ENCODE measurements at regions of chr13 and their contacts with region 1.

Region 1: GRCh38 chr13:28324181-28324789 is 170.6 kb downstream of the FLT1 start:
- DNase-seq: peak; percentile 80
- H3K4me3 ChIP-seq: no peak overlapping the region
- H3K27ac ChIP-seq: peak overlapping the region; percentile 86
- H3K4me1 ChIP-seq: peaks cover 63% of the 10 kb centered on the region
- H3K27me3 ChIP-seq: no peaks in the 10 kb centered on the region
- CTCF ChIP-seq: peak; percentile 81 to 87
- POLR2A ChIP-seq: no peak

Region 2: GRCh38 chr13:28100150-28101121 is 223.8 kb before region 1 on chr13 and contains the start of gene FLT3:
- CTCF ChIA-PET with region 1: no interaction called
- POLR2A ChIA-PET with region 1: no interaction called
- dilution Hi-C with region 1: no loop called
- intact Hi-C with region 1: no loop called
- DNase-seq: peak; percentile 10
- H3K4me3 ChIP-seq: peak within 1 kb of the TSS in 1 of 3 experiments; percentile 26
- H3K27ac ChIP-seq: no peak within 1 kb of the TSS
- H3K4me1 ChIP-seq: peaks cover 6% of the 10 kb centered on the region
- H3K27me3 ChIP-seq: peaks cover 36 to 68% of the 10 kb centered on the region in 2 experiments
- CTCF ChIP-seq: no peak
- POLR2A ChIP-seq: no peak
- total RNA-seq, gene FLT3: not detected in 2 replicates

Region 3: GRCh38 chr13:28220166-28220565 is 104.1 kb before region 1 on chr13:
- CTCF ChIA-PET with region 1: no interaction called
- POLR2A ChIA-PET with region 1: no interaction called
- dilution Hi-C with region 1: no loop called
- intact Hi-C with region 1: no loop called
- DNase-seq: peak; percentile 7
- H3K4me3 ChIP-seq: no peak overlapping the region
- H3K27ac ChIP-seq: no peak overlapping the region
- H3K4me1 ChIP-seq: no peaks in the 10 kb centered on the region
- H3K27me3 ChIP-seq: no peaks in the 10 kb centered on the region
- CTCF ChIP-seq: no peak
- POLR2A ChIP-seq: no peak

Region 4: DNA sequence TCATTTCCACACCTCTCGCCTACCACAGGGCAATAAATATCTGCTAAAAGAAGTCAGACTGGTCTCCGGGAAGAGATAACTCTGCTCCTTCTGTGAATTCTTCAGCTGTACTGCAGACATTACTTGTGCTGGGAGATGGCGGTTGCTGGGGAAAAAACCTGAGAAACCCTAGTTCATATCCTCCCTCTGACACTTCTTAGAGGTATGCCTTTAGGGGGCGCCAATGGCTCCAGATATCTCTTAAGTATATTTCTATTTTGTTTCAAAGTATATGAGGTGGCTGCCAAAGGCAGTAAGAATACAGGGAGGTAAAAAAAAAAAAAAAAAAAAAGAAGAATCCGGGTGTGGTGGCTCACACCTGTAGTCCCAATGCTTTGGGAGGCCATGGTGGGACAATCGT is 10.7 kb before region 1 on chr13:
- CTCF ChIA-PET with region 1: interaction called, 15 read pairs
- POLR2A ChIA-PET with region 1: no interaction called
- dilution Hi-C with region 1: no loop called
- intact Hi-C with region 1: no loop called
- DNase-seq: peak; percentile 66
- H3K4me3 ChIP-seq: no peak overlapping the region
- H3K27ac ChIP-seq: no peak overlapping the region
- H3K4me1 ChIP-seq: no peaks in the 10 kb centered on the region
- H3K27me3 ChIP-seq: no peaks in the 10 kb centered on the region
- CTCF ChIP-seq: peak; percentile 44 to 48
- POLR2A ChIP-seq: no peak

Region 5: GRCh38 chr13:28379371-28380083 is 55.2 kb after region 1 on chr13:
- CTCF ChIA-PET with region 1: interaction called, 12 read pairs
- POLR2A ChIA-PET with region 1: no interaction called
- dilution Hi-C with region 1: no loop called
- intact Hi-C with region 1: loop called (anchors 2 kb)
- DNase-seq: peak; percentile 86
- H3K4me3 ChIP-seq: no peak overlapping the region
- H3K27ac ChIP-seq: peak overlapping the region; percentile 58
- H3K4me1 ChIP-seq: peaks cover 34% of the 10 kb centered on the region
- H3K27me3 ChIP-seq: no peaks in the 10 kb centered on the region
- CTCF ChIP-seq: no peak
- POLR2A ChIP-seq: peak; percentile 20

Region 6: DNA sequence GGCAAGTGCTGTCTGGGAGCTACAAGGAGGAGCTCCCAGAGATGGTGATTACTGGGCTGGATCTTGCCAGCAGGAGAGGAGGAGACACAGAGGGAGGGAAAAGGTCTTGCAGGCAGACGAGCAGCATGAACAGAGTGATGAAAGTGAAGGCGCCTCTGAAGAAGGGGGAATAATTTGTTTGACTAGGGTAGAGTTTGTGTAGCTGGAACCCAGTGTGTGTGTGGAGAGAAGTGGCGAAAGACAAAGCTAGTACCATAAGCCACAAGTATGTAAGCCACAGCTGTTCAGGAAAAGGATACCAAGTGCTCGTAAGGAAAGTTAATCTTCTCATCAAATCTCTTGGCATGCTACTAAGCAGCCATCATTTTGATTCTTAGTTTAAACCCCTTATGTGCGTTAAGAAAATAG is 165.2 kb after region 1 on chr13:
- CTCF ChIA-PET with region 1: interaction called, 12 read pairs
- POLR2A ChIA-PET with region 1: interaction called, 3 read pairs
- dilution Hi-C with region 1: loop called (anchors 25 kb)
- intact Hi-C with region 1: loop called (anchors 2 kb)
- DNase-seq: peak; percentile 55
- H3K4me3 ChIP-seq: no peak overlapping the region
- H3K27ac ChIP-seq: peak overlapping the region; percentile 76
- H3K4me1 ChIP-seq: peaks cover 46% of the 10 kb centered on the region
- H3K27me3 ChIP-seq: no peaks in the 10 kb centered on the region
- CTCF ChIP-seq: no peak
- POLR2A ChIP-seq: no peak

Region 7: DNA sequence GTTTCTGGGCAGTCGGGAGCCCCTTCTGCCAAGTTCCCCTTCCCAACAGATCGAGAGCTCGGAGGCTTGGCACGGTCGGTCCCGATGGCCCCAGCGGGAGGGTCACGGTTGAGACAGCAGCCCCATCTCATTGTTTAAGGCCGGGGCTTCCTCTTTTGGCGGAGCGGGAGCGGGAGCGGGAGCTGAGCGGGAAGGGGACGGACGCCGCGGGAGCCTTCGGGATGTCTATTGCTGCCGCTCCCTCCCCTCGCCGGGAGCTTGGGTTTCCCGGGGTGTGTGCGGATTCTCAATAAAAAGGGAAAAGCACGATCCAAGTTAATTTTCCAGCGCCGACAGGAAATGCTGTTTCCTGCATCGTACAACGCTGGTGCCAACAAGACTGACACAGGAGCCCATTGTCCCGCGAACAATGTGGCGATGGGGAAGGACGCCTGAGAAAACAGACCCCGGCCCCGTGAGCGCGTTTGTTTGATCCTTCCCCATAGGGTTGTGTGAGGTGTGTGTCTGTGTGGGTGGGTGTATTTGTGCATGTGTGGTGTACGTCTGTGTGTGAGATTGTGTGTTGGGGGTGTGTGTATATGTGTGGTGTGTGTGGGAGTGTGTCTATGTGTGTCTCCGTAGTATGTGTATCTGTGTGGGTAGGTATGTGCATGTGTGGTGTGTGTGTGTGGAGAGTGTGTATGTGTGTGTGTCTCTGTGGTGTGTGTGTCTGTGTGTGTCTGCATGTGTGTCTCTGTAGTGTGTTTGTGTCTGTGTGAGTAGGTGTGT is 207.0 kb after region 1 on chr13:
- CTCF ChIA-PET with region 1: interaction called, 10 read pairs
- POLR2A ChIA-PET with region 1: no interaction called
- dilution Hi-C with region 1: no loop called
- intact Hi-C with region 1: loop called (anchors 2 kb)
- DNase-seq: peak; percentile 85
- H3K4me3 ChIP-seq: peak overlapping the region in 2 of 3 experiments; percentile 45
- H3K27ac ChIP-seq: peak overlapping the region; percentile 36
- H3K4me1 ChIP-seq: peaks cover 14% of the 10 kb centered on the region
- H3K27me3 ChIP-seq: no peaks in the 10 kb centered on the region
- CTCF ChIP-seq: no peak
- POLR2A ChIP-seq: no peak

Region 8: DNA sequence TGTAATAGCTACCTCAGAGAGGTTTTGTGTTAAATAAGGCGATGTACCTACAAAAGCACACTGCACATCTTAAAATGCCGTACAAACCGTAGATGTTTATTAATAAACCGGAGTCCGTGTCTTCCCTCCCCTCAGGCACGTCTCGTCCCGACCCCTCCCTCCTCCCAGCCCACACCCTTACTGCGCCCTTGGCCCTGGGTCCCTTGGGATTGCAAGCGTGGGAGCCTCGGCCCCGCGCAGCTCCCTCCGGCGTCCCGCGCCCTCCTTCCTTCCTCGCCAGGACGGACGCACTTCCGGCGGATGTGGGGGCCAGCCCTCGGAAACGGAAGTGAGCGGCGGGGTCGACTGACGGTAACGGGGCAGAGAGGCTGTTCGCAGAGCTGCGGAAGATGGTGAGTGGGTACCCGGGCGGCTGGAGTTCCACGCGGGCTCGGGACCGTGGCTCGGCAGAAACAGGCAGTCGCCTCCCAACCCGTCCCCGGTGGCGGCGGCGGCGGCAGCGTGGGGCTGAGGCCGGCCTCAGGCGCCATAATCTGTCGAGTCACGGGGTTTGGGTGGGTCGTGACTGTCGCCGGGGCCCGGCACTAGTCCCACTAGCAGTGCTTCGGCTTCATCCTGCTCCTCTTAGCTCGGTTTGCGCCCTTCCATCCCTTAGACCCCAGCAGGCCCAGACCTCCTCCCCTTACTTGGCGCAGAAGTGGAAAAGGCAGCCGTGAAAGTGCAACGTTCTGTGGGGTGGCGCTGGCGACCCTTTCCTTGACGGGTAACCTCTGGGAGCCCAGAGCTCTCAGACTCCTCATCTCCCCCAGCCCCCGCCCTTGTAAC is 334.7 kb after region 1 on chr13 and contains the start of gene POMP:
- CTCF ChIA-PET with region 1: interaction called, 16 read pairs
- POLR2A ChIA-PET with region 1: no interaction called
- dilution Hi-C with region 1: no loop called
- intact Hi-C with region 1: loop called (anchors 1 kb)
- DNase-seq: peak; percentile 91
- H3K4me3 ChIP-seq: peak within 1 kb of the TSS; percentile 90 to 96 (median 96)
- H3K27ac ChIP-seq: peak within 1 kb of the TSS; percentile 99
- H3K4me1 ChIP-seq: peaks cover 20% of the 10 kb centered on the region
- H3K27me3 ChIP-seq: no peaks in the 10 kb centered on the region
- CTCF ChIP-seq: no peak
- POLR2A ChIP-seq: peak; percentile 43
- total RNA-seq, gene POMP: 88.9 and 105 TPM in 2 replicates

Measured in endothelial cell of umbilical vein (primary cell).